ENCODE measurements at regions of chr5 and their contacts with region 1.

Region 1: GRCh38 chr5:135466178-135467050 is 14.3 kb upstream of the TIFAB start:
- DNase-seq: peak; percentile 54 to 77
- ATAC-seq: peak; percentile 94

Region 2: DNA sequence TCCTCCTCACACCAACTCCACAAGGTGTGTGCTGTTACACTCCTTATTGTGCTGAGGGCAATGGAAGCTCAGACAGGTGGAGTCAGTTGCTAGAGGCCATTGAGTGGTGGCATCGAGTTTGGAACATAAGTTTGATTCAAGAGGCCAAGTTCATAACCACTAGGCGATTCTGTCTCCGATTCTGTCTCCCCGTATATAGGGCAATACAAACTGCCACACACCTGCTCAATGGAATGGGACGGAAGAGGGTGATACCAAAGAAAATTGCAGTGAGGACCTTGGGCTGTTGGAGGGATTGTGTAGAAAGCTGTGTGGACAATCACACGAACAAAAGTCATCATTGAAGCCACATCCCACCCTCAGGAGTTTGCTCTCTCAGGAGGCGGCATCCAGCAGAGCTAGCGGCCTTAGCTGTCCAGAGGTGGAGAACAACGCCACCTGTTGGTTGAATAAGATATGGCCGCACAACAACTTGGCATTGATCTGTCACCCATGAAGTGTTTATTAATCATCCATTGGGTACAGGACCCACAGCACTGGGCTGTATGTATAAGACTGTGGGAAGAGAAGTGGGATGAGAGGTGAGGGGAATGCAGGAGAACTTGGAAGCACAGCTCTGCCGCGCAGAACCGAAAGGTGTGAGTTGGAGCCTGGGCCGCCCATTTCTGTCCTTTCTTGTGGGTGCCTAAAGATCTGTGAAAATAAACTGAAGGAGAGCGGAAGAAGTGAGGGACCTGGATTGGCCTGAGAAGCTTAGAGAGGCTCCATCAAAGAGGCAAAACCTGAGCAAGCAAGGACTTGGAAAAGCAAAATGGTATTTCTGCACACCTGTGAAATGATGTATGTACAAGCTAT is 85.4 kb after region 1 on chr5:
- intact Hi-C with region 1: loop called (anchors 5 kb)
- DNase-seq: peak in 1 of 2 donors; percentile 70
- ATAC-seq: peak; percentile 73

Measured in left colon (tissue), 2 donors.